A549 (cell line): ENCODE measurements at regions of chr7 and their contacts with region 1.

Region 1: DNA sequence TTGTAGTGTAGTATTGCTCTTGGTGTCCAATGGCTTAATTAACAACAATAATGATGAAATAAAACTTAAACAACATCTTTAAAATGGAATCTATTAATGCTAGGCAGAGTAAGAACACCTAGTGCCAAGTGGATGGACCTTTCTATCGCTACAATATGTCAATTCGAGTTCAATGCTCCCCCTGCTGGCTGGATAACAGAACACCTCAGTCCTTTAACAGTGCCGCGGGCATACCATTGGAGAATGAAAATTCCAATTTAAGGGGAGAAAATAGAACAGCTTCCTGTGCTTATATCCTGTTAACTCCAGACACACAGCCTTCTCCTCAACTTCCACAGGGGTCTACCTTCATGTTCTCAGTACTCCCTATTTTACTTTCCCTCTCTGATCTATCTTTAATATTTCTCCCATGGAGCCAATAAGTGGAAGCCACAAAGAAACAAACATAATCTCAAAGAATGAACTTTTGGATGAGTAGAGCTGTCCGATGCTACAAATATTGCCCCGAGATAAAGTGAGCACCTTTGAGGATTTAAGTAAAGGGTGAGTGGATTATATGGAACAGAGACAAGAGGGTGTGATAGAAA is 41.4 kb downstream of the COL1A2 start:
- DNase-seq: peak; percentile 59 to 76
- ATAC-seq: peak; percentile 94 to 97; a peak in 5 of 6 replicates
- H3K4me3 ChIP-seq: no peak overlapping the region
- H3K27ac ChIP-seq: 0 out of 6 replicates have a peak overlapping the region, but pooled peaks of 1 of the 2 experiments have one; percentile 45
- H3K4me1 ChIP-seq: peaks cover 10% of the 10 kb centered on the region; the same call in 1 of the 3 replicates
- CTCF ChIP-seq: peak; percentile 90
- EP300 ChIP-seq: no peak
- POLR2A ChIP-seq: no peak
- RAD21 ChIP-seq: peak; percentile 87

Region 2: DNA sequence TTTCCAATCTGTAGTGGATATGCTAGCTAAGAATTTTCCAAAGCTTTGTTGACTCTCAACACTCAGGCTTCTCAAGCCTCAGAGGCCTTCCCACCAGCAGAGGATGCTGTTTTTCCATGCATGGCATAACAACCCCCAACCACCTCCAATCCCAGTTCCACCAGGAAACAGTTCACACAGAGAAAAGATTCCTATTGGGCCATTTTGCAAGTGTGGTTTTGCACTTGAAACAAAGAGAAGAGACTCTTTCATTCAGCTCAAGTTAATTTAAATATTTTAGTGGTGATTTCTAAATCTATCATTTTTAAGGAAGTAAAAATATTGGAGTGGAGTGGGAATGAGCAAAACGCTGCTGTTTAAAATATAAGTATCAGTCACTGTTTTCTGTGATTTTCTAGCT is 147.0 kb before region 1 on chr7:
- CTCF ChIA-PET with region 1: interaction called, 89 read pairs
- POLR2A ChIA-PET with region 1: no interaction called
- DNase-seq: peak; percentile 64 to 86
- ATAC-seq: peak; percentile 94 to 99
- H3K4me3 ChIP-seq: no peak overlapping the region
- H3K27ac ChIP-seq: 0 out of 6 replicates have a peak overlapping the region, but pooled peaks of 1 of the 2 experiments have one; percentile 17
- H3K4me1 ChIP-seq: 0 out of 3 replicates have a peak, but pooled peaks cover 5% of the 10 kb centered on the region
- CTCF ChIP-seq: peak; percentile 91
- EP300 ChIP-seq: no peak
- POLR2A ChIP-seq: no peak
- RAD21 ChIP-seq: peak; percentile 93 to 100

Region 3: DNA sequence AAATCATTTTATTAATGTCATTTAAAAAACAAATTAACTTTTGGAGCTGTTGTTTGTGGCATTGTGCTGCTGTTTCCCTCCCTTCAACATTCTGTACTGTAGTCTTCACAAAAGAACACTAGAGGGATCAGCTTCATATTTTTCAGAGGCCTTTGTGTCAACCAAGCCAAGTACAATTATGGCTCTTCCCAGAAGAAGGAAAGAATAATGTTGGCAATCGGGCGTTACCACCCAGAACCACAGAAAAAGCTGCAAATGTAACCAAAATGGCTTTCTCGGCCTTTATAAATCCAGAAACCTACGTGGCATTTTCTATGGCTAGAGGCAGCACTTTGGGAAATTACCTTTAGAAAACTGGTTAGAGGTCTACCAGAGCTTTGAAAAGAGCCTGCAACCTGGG is 140.3 kb before region 1 on chr7:
- CTCF ChIA-PET with region 1: interaction called, 89 read pairs
- POLR2A ChIA-PET with region 1: no interaction called
- DNase-seq: peak; percentile 18 to 64
- ATAC-seq: peak; percentile 76 to 87; a peak in 5 of 6 replicates
- H3K4me3 ChIP-seq: no peak overlapping the region
- H3K27ac ChIP-seq: peak overlapping the region in 1 of 2 experiments; percentile 55; a peak in 3 of 6 replicates
- H3K4me1 ChIP-seq: peaks cover 38% of the 10 kb centered on the region
- CTCF ChIP-seq: peak; percentile 66
- EP300 ChIP-seq: no peak
- POLR2A ChIP-seq: no peak
- RAD21 ChIP-seq: peak; percentile 82 to 83

Region 4: DNA sequence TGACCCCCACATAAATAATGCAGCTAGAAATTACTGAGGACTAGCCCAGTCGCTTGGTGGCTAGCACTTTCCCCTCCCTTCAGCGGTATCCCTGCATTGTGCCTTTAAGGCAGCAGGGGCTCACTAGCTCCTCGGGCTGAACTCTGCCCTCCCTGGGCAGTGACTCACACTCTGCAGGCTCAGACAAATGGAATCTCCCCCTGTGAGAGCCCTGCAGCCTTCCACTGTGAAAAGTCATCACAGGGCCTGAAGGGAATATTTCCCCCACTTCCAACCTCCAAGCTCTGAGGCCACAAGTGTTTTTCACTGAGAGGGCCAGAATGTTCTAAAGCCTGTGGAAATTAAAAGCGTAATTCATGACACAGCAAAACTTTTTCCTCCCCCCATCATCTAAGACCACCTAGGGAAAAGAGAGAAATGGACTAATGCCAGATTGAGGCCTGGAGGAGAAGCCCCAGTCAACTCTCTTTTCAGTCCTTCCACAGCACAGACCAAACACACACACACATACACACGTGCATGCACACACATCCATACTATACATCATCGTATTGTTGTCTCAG is 135.0 kb before region 1 on chr7:
- CTCF ChIA-PET with region 1: interaction called, 89 read pairs
- POLR2A ChIA-PET with region 1: no interaction called
- DNase-seq: peak; percentile 93 to 95
- ATAC-seq: peak; percentile 99 to 100
- H3K4me3 ChIP-seq: no peak overlapping the region
- H3K27ac ChIP-seq: peak overlapping the region; percentile 91 to 92
- H3K4me1 ChIP-seq: peaks cover 67% of the 10 kb centered on the region
- CTCF ChIP-seq: no peak
- EP300 ChIP-seq: peak; percentile 56 to 61; a peak in 2 of 5 replicates
- POLR2A ChIP-seq: no peak
- RAD21 ChIP-seq: peak; percentile 22 to 41; a peak in 2 of 5 replicates

Region 5: GRCh38 chr7:94423863-94424735 is 12.0 kb before region 1 on chr7:
- CTCF ChIA-PET with region 1: interaction called, 32 read pairs
- POLR2A ChIA-PET with region 1: no interaction called
- DNase-seq: peak in 1 of 2 experiments; percentile 6
- ATAC-seq: no peak; a peak in 1 of 6 replicates
- H3K4me3 ChIP-seq: no peak overlapping the region
- H3K27ac ChIP-seq: no peak overlapping the region
- H3K4me1 ChIP-seq: no peaks in the 10 kb centered on the region
- CTCF ChIP-seq: no peak
- EP300 ChIP-seq: no peak
- POLR2A ChIP-seq: no peak
- RAD21 ChIP-seq: no peak

Region 6: DNA sequence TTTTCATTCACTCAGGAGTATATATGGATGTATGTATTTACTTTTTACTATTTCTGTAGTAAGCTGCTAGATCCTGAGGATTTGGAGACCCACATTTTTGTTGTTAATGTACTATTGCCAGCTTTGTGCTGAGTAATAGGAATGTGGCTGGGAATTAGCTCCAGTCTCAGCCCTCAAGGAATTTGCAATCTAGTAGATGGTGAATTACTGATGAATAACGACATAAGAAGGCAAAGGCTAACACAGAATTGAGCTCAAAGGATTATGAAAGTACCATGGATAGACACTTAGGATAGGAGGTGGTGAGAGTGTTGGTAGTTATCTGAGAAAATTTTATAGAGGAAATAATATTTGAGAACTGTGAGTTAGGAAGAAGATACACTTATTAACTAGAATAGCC is 93.4 kb after region 1 on chr7:
- CTCF ChIA-PET with region 1: no interaction called
- POLR2A ChIA-PET with region 1: no interaction called
- DNase-seq: no peak
- ATAC-seq: no peak
- H3K4me3 ChIP-seq: no peak overlapping the region
- H3K27ac ChIP-seq: no peak overlapping the region
- H3K4me1 ChIP-seq: no peaks in the 10 kb centered on the region
- CTCF ChIP-seq: no peak
- EP300 ChIP-seq: no peak
- POLR2A ChIP-seq: no peak
- RAD21 ChIP-seq: no peak